K562 (cell line): ENCODE measurements at regions of chr2 and their contacts with region 1.

Region 1: DNA sequence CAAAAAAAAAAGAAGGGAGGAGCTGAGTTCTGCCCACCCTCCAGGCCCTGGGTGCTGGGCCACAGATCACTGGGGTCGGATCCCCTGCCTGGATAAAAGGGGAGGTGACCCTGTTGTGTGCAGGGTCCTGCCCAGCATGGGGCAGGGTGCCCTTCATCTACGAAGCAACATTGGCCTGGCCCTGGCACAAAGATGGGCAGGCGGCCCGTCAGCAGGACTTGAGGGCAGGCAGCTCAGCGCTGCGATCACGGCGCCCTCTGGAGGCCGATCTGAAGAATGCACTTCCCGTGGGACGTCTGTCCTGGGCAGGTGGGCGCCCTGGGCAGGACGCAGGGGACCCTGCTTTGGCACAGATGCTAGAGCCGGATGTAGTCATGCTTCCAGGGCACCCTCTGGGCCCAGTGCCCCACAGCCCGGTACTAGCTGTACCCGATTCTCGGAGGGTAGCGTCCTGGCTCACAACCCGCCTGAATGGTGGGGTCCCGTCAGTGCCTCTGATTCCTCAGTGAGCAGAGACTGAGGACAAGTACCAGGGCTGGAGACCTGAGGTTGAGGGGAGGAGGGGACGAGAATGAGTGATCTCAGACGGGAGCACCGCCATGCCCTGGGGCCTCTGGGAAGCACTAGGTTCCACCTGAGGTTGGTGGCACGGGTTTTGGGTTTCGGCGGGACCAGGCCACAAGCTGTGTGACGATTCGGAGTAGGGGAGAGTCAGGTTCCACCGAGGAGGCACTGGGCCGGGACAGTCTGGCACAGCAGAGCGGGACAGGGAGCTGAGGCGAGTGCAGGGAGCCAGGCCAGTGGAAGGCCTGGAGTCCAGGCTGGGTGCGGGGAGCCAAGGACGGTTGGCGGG is 18.0 kb downstream of the ARID5A start:
- DNase-seq: peak; percentile 61 to 78 (median 70)
- ATAC-seq: peak; percentile 69
- H3K4me3 ChIP-seq: no peak overlapping the region
- H3K27ac ChIP-seq: no peak overlapping the region
- H3K4me1 ChIP-seq: peaks cover 0 to 31% of the 10 kb centered on the region in 2 experiments; a peak in 3 of 5 replicates
- H3K27me3 ChIP-seq: peaks cover 0 to 13% of the 10 kb centered on the region in 2 experiments; a peak in 1 of 5 replicates
- CTCF ChIP-seq: peak; percentile 74 to 94 (median 79)
- EP300 ChIP-seq: no peak
- POLR2A ChIP-seq: no peak
- RAD21 ChIP-seq: peak; percentile 47 to 75

Region 2: GRCh38 chr2:96679848-96680247 is 125.3 kb after region 1 on chr2:
- CTCF ChIA-PET with region 1: no interaction called
- POLR2A ChIA-PET with region 1: no interaction called
- in situ Hi-C with region 1: no loop called
- intact Hi-C with region 1: no loop called
- DNase-seq: peak in 1 of 4 experiments; percentile 27
- ATAC-seq: peak; percentile 63
- H3K4me3 ChIP-seq: no peak overlapping the region
- H3K27ac ChIP-seq: no peak overlapping the region
- H3K4me1 ChIP-seq: no peaks in the 10 kb centered on the region; a peak in 1 of 5 replicates
- H3K27me3 ChIP-seq: peaks cover 23 to 41% of the 10 kb centered on the region in 2 experiments
- CTCF ChIP-seq: no peak
- EP300 ChIP-seq: no peak
- POLR2A ChIP-seq: no peak
- RAD21 ChIP-seq: no peak

Region 3: DNA sequence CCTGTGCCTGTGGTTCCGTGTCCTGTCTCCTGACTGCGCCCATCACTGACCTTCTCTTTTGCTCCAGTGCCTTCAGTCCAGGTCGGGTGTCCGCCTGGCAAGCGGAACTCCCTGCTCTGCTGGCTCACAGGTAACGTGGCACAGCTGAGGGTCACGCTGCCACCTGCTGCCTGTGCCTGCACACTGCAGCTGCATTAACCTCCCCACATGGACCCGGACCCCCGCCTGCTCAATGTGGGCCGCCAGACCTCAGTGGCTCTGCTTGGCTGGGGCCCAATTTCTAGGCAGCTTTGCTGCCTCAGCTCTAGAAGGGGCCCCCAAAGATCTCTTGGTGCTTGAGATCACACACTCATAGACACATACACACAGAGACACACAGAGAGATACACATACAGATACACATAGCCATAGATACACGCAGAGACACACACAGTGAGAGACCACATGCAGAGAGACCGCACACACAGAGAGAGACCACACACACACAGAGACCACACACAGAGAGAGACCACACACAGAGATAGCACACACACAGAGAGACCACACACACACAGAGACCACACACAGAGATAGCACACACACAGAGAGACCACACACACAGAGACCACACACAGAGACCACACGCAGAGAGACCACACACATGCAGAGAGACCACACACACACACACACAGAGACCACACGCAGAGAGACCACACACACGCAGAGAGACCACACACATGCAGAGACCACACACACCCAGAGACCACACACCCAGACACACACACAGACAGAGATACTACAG is 246.7 kb after region 1 on chr2:
- CTCF ChIA-PET with region 1: no interaction called
- POLR2A ChIA-PET with region 1: no interaction called
- in situ Hi-C with region 1: no loop called
- intact Hi-C with region 1: loop called (anchors 10 kb)
- DNase-seq: peak; percentile 59 to 73 (median 67)
- ATAC-seq: peak; percentile 96
- H3K4me3 ChIP-seq: no peak overlapping the region
- H3K27ac ChIP-seq: no peak overlapping the region
- H3K4me1 ChIP-seq: peaks cover 0 to 10% of the 10 kb centered on the region in 2 experiments; a peak in 2 of 5 replicates
- H3K27me3 ChIP-seq: no peaks in the 10 kb centered on the region
- CTCF ChIP-seq: peak; percentile 68 to 79 (median 70)
- EP300 ChIP-seq: no peak
- POLR2A ChIP-seq: no peak
- RAD21 ChIP-seq: peak; percentile 42 to 71

Region 4: DNA sequence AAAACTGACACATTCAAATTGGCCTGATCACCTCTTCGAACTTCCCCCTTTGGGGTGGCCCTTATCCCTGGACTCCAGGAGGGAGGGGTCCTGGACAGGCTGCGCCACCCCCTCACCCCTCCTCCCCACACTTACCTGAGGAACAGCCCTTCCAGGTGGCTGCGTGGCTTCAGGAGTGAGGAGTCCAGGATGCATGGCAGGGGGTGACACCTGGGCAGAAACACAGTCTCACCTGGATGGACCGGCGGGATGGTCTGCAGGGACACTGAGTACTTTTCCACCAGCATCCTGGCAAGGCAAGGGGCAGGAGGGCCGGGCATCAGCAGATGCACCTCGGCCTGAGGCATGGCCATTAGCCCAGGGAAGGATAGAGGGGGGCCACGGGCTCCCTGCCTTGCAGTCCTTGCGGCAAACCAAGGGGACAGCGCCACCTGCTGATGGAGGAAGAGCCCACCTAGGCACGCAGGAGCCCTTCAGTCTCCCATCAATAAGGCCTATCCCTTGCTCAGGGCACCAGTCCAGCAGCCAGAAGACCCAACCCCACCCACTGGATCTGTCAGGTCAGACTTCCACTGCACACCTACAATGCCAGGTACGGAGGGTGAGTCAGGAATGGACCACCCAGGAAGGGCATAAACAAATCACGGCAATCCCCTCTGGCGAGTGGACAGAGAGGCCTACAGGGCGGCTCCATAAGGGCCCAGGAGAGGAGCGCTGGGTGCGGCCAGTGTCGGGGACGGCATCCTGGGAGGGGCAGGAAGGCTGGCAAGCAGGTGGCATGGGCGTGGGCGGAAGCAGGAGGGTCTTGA is 405.8 kb after region 1 on chr2:
- CTCF ChIA-PET with region 1: no interaction called
- POLR2A ChIA-PET with region 1: no interaction called
- in situ Hi-C with region 1: loop called (anchors 25 kb)
- intact Hi-C with region 1: loop called (anchors 5 kb)
- DNase-seq: peak; percentile 89 to 93 (median 90)
- ATAC-seq: peak; percentile 100
- H3K4me3 ChIP-seq: no peak overlapping the region
- H3K27ac ChIP-seq: no peak overlapping the region
- H3K4me1 ChIP-seq: peaks cover 4 to 23% of the 10 kb centered on the region in 2 experiments; a peak in 4 of 5 replicates
- H3K27me3 ChIP-seq: no peaks in the 10 kb centered on the region; a peak in 1 of 5 replicates
- CTCF ChIP-seq: peak; percentile 94 to 96 (median 94)
- EP300 ChIP-seq: no peak
- POLR2A ChIP-seq: no peak
- RAD21 ChIP-seq: peak; percentile 94 to 98